Testis (tissue), 5 donors: ENCODE measurements at regions of chr22 and their contacts with region 1.

Region 1: GRCh38 chr22:22959147-22959827 is 71.7 kb downstream of the IGLL5 start:
- DNase-seq: peak; percentile 91
- H3K4me3 ChIP-seq: no peak overlapping the region
- H3K27ac ChIP-seq: no peak overlapping the region
- H3K4me1 ChIP-seq: no peaks in the 10 kb centered on the region
- H3K27me3 ChIP-seq: no peaks in the 10 kb centered on the region
- CTCF ChIP-seq: peak; percentile 93 to 97 (median 94)
- POLR2A ChIP-seq: no peak

Region 2: DNA sequence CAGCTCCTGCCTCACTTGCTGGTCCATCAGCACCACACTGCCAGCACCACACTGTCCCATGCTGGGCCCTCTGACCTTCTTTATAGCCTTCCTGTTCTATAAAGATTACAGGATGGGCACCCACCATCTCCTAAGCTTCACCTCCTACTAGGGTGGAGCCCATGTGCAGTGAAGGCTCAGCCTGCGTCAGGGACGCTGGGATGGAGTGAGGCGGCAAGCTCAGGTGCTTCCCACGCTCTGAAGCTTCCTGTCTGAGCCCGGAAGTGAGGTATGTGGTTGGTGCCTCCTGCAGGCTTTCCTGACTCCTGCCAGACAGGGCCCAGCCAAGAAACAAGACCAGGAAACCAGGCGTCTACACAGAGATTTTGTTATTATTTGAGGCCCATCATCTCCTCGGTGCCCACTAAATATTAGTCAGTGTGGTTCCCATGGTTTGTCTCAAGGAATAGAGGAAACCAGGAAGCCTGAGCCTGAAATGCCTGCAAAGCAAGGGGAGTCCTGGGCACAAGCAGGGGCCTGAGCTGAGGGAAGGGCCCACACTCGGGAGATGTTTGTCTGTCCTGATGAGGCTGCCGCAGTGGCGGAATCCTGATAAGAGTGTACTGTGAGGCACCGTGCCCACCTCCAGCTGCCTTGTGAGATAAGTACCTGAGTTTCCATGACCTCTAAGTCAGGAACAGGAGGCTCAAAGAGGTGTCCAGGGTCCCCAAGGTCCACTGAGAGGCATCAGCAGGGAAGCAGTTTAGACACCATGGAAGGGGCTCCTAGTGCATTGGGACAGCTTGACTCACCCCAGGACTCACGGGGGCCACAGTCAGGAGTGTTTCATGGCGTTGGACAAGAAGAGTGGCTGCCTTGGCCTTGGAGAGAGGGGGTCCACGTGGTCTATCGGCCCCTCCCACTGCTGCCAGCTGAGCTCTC is 160.5 kb after region 1 on chr22:
- intact Hi-C with region 1: loop called (anchors 5 kb)
- DNase-seq: no peak
- H3K4me3 ChIP-seq: no peak overlapping the region
- H3K27ac ChIP-seq: no peak overlapping the region
- H3K4me1 ChIP-seq: no peaks in the 10 kb centered on the region
- H3K27me3 ChIP-seq: no peaks in the 10 kb centered on the region
- CTCF ChIP-seq: no peak
- POLR2A ChIP-seq: no peak

Region 3: GRCh38 chr22:23457355-23458068 is 498.2 kb after region 1 on chr22:
- intact Hi-C with region 1: no loop called
- DNase-seq: no peak
- H3K4me3 ChIP-seq: no peak overlapping the region
- H3K27ac ChIP-seq: no peak overlapping the region
- H3K4me1 ChIP-seq: peaks cover 8% of the 10 kb centered on the region
- H3K27me3 ChIP-seq: no peaks in the 10 kb centered on the region
- CTCF ChIP-seq: no peak
- POLR2A ChIP-seq: no peak